Activated CD8-positive, alpha-beta T cell treated with anti-CD3 and anti-CD28 coated beads, Interleukin-2, amount 10 ng/mL, durations not matched to agents 7 days and 5 days (primary cell): ENCODE measurements at regions of chr4 and their contacts with region 1.

Region 1: DNA sequence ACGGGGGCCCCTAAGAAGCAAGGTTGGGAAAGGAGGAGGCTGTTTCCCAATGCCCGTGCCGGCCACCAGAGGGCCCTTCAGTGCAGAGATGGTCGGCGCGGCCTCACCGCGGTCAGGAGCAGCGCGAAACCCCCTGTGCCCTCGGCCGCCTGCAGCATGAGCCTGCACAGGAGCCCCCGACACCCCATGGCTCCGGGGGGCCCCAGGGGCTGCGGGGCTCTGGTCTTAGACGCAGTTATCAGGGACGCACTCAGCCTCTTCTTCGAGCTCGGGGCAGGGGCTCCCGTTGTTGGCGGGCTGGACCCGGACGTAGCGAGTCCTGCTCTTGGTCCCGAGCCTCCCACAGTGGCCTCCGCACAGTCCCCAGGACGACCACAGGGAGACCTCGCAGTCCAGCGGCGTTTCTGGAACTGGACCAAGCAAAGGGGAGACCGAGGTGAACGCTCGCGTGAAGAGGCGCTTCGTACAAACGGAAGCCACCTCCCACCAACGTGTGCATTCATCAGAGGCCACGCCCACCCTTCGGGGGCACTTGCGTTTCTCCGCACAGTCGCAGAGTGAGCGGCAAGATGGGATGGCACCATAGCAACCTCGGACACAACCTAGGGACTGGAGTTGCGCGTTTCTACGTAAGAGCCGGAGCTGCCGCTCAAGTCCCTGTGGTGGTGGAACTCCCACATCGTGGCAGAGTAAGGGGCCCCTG is 5.0 kb downstream of the SPON2 start:
- DNase-seq: peak; percentile 95
- ATAC-seq: peak; percentile 91
- H3K4me3 Mint-ChIP-seq: peak overlapping the region; percentile 80
- H3K27ac Mint-ChIP-seq: peak overlapping the region; percentile 85
- H3K4me1 Mint-ChIP-seq: peaks cover 42% of the 10 kb centered on the region
- H3K27me3 Mint-ChIP-seq: peaks cover 20% of the 10 kb centered on the region

Region 2: GRCh38 chr4:1113311-1114009 is 53.9 kb before region 1 on chr4 and contains the start of gene RNF212:
- CTCF ChIA-PET with region 1: no interaction called
- POLR2A ChIA-PET with region 1: no interaction called
- DNase-seq: peak; percentile 35
- ATAC-seq: peak; percentile 84
- H3K4me3 Mint-ChIP-seq: peak within 1 kb of the TSS; percentile 51
- H3K27ac Mint-ChIP-seq: peak within 1 kb of the TSS; percentile 37
- H3K4me1 Mint-ChIP-seq: no peaks in the 10 kb centered on the region
- H3K27me3 Mint-ChIP-seq: peaks cover 17% of the 10 kb centered on the region
- total RNA-seq, gene RNF212: 2.0 to 2.7 TPM

Region 3: DNA sequence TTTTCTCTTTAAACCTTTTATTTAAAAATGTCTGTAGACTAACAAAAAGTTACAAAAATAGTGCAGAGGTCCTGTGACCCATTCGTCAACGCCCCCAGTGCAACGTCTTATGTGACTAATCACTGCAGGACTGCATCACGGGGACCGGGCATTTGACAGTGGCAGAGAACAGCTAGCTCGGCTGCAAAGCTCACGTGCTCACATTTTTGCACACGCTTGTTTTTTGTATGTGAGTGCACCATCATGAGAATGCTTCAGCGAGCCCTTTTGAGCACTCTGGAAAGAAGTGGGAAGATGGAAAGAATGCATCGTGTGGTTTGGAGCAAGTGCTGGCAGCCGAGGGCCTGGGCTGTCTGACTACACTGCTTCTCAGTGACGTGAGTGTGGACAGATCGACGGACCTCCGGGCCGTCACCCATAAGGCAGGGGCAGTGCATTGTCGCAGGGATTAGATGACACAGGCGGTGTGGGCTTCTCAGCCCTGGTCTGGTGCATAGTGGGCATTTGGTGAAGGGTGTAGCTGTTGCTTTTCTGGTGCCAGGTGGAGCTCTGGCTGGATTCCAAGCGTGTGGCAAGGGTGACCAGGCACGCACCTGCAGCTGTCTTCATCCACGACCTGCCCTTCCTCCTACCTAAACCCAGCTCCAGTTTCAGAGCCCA is 12.7 kb before region 1 on chr4:
- CTCF ChIA-PET with region 1: interaction called, 15 read pairs
- POLR2A ChIA-PET with region 1: no interaction called
- DNase-seq: no peak
- ATAC-seq: no peak
- H3K4me3 Mint-ChIP-seq: no peak overlapping the region
- H3K27ac Mint-ChIP-seq: no peak overlapping the region
- H3K4me1 Mint-ChIP-seq: no peaks in the 10 kb centered on the region
- H3K27me3 Mint-ChIP-seq: peaks cover 23% of the 10 kb centered on the region

Region 4: DNA sequence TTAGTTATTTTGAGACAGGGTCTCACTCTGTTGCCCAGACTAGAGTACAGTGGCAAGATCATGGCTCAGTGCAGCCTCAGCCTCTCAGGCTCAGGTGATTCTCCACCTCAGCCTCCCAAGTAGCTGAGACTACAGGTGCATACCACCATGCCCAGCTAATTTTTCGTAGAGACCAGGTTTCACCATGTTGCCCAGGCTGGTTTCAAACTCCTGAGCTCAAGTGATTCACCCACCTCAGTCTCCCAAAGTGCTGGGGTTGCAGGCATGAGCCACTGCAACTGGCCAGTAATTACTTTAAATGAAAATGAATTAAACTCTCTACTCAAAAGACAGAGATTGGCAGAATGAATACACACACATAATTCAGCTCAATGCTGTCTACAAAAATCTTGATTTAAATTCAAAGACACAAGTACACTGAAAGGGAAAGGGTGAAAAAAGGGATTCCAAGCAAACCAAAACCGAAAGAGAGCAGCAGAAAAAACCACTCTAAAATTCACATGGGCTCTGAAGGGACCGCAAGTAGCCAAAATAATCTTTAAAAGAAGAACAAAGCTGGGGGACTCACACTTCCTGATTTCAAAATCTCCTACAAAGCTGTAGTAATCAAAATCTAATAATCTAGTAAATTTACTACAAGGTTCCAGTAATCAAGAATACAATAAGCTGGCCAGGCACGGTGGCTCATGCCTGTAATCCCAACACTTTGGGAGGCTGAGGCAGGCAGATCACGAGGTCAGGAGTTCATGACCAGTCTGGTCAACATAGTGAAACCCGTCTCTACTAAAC is 16.8 kb after region 1 on chr4:
- CTCF ChIA-PET with region 1: interaction called, 14 read pairs
- POLR2A ChIA-PET with region 1: interaction called, 3 read pairs
- DNase-seq: no peak
- ATAC-seq: peak; percentile 31
- H3K4me3 Mint-ChIP-seq: peak overlapping the region; percentile 61
- H3K27ac Mint-ChIP-seq: peak overlapping the region; percentile 79
- H3K4me1 Mint-ChIP-seq: peaks cover 40% of the 10 kb centered on the region
- H3K27me3 Mint-ChIP-seq: peaks cover 2% of the 10 kb centered on the region

Region 5: GRCh38 chr4:1200425-1201035 is 33.1 kb after region 1 on chr4:
- CTCF ChIA-PET with region 1: interaction called, 35 read pairs
- POLR2A ChIA-PET with region 1: interaction called, 15 read pairs
- DNase-seq: peak; percentile 54
- ATAC-seq: peak; percentile 2
- H3K4me3 Mint-ChIP-seq: peak overlapping the region; percentile 82
- H3K27ac Mint-ChIP-seq: peak overlapping the region; percentile 99
- H3K4me1 Mint-ChIP-seq: peaks cover 60% of the 10 kb centered on the region
- H3K27me3 Mint-ChIP-seq: no peaks in the 10 kb centered on the region

Region 6: GRCh38 chr4:1216869-1217294 is 49.5 kb after region 1 on chr4:
- CTCF ChIA-PET with region 1: interaction called, 12 read pairs
- POLR2A ChIA-PET with region 1: interaction called, 5 read pairs
- DNase-seq: peak; percentile 87
- ATAC-seq: peak; percentile 96
- H3K4me3 Mint-ChIP-seq: peak overlapping the region; percentile 65
- H3K27ac Mint-ChIP-seq: peak overlapping the region; percentile 89
- H3K4me1 Mint-ChIP-seq: peaks cover 41% of the 10 kb centered on the region
- H3K27me3 Mint-ChIP-seq: no peaks in the 10 kb centered on the region

Region 7: DNA sequence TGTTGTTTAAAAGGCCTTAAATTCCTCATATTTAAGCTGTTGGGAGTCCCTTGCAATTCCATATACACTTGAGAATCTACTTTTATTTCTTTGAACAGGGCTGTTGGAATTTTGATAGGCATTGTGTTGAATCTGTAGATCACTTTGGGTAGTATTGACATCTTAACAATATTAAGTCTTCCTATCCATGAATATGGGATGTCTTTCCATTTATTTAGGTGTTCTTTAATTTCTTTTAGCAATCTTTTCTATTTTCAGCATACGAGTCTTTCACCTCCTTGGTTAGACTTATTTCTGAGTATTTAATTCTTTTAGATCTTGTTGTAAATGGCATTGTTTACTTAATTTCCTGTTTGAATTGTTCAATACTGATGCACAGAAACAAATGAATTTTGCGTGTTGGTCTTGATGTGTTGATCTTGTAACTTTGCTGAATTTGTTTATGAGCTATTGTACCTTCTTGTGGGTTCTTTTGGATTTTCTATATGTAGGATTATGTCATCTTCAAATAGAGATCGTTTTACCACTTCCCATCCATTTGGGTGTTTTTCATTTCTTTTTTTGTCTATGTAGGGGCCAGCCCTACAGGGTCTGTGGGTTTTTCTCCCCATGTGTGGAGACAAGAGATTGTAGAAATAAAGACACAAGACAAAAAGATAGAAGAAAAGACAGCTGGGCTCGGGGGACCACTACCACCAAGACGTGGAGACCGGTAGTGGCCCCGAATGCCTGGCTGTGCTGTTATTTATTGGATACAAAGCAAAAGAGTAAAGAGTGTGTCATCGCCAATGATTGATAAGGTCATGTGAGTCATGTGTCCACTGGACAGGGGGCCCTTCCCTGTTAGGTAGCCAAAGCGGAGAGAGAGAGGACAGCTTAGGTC is 99.7 kb after region 1 on chr4:
- CTCF ChIA-PET with region 1: interaction called, 35 read pairs
- POLR2A ChIA-PET with region 1: interaction called, 3 read pairs
- DNase-seq: no peak
- ATAC-seq: peak; percentile 79
- H3K4me3 Mint-ChIP-seq: peak overlapping the region; percentile 70
- H3K27ac Mint-ChIP-seq: peak overlapping the region; percentile 95
- H3K4me1 Mint-ChIP-seq: peaks cover 20% of the 10 kb centered on the region
- H3K27me3 Mint-ChIP-seq: no peaks in the 10 kb centered on the region

Region 8: DNA sequence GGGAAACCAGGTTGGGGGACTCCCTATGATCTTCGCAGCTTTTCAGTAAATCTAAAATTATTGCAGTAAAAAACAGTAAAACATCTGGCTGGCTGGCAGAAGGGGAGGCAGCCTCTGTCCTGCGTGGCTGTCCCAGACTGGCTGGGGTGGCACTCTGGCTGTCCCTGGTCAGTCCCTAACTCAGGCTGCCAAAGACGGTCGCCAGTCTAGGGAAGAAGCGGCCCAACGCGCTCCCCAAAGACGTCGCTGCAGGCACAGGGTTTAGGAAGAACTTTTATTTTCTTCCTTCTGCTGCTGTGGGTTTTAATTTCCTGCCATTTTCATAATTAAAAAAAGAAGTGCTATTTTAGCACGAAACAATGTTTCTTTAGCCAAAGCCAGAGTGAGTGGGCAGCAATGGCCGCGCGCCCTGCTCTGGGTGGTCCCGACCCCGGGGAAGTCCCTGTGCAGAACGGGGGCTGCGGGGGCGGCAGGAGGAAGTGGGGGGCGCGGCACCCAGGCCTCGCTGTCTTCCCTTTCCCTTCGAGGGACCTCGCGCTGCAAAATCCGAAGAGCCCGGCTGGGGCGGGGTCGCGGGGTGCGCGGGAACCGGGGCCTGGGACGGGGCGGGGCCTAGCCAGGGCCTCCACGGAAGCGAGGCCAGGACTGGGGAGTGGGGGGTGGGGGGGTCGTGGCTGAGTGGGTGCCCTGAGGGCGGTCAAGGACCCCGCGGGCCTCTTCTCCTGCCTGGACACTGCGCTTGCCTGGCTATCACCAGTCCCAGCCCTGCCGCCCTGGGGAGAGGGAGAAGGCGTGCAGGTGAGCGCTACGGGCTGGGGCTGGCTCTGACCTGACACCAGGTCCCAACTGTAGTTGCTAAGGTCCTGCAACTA is 694.9 kb after region 1 on chr4:
- CTCF ChIA-PET with region 1: no interaction called
- POLR2A ChIA-PET with region 1: no interaction called
- DNase-seq: peak; percentile 49
- ATAC-seq: peak; percentile 71
- H3K4me3 Mint-ChIP-seq: peak overlapping the region; percentile 74
- H3K27ac Mint-ChIP-seq: peak overlapping the region; percentile 88
- H3K4me1 Mint-ChIP-seq: peaks cover 40% of the 10 kb centered on the region
- H3K27me3 Mint-ChIP-seq: no peaks in the 10 kb centered on the region